GM12878 (cell line): ENCODE measurements at regions of chr4 and their contacts with region 1.

Region 1: DNA sequence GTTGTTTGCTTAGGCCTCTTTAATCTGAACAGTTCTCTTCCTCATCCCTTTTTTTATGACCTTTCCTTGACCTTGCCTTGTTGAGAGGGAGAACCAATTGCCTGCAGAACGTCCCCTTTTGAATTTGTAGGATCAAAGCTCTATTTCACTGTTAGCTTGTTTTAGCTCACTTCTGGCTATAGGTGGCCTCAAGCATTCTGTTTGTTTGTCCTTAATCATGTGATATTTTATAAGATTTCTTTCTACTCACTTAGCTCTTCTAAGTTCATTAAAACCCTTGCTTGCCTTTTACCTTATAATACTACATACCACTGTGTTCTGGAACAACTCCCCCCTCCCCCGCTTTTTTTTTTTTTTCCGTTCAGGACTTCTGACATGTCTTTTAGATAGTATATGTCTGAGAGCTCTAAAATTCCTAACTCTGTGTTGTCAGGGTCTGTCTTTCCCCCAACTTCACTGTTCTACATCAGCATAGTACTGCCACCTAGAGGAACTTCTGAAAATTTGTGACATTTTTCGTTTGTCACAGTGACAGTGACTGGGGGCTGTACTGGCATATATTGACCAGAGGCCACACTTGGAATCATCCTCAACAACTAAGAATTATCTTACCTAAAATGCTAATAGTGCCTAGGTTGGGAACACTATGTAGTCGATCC is 128.5 kb downstream of the LARP7 start:
- DNase-seq: peak; percentile 7
- ATAC-seq: peak; percentile 91
- H3K4me3 ChIP-seq: no peak overlapping the region
- H3K27ac ChIP-seq: no peak overlapping the region
- H3K4me1 ChIP-seq: no peaks in the 10 kb centered on the region; the same call in 1 of the 2 replicates
- H3K27me3 ChIP-seq: no peaks in the 10 kb centered on the region
- CTCF ChIP-seq: peak; percentile 49 to 58 (median 56); a peak in 5 of 6 replicates
- EP300 ChIP-seq: no peak
- POLR2A ChIP-seq: no peak
- RAD21 ChIP-seq: peak; percentile 67

Region 2: GRCh38 chr4:112099701-112100297 is 665.6 kb before region 1 on chr4:
- CTCF ChIA-PET with region 1: interaction called, 11 read pairs
- POLR2A ChIA-PET with region 1: no interaction called
- RAD21 ChIA-PET with region 1: interaction called, 5 read pairs
- SMC1A ChIA-PET with region 1: interaction called, 4 read pairs
- in situ Hi-C with region 1: no loop called
- intact Hi-C with region 1: no loop called
- DNase-seq: peak; percentile 27
- ATAC-seq: peak; percentile 93
- H3K4me3 ChIP-seq: no peak overlapping the region
- H3K27ac ChIP-seq: no peak overlapping the region
- H3K4me1 ChIP-seq: no peaks in the 10 kb centered on the region
- H3K27me3 ChIP-seq: no peaks in the 10 kb centered on the region
- CTCF ChIP-seq: peak; percentile 35 to 66 (median 50); a peak in 5 of 6 replicates
- EP300 ChIP-seq: no peak
- POLR2A ChIP-seq: no peak
- RAD21 ChIP-seq: peak; percentile 75

Region 3: GRCh38 chr4:112472318-112472717 is 293.1 kb before region 1 on chr4:
- CTCF ChIA-PET with region 1: no interaction called
- POLR2A ChIA-PET with region 1: no interaction called
- RAD21 ChIA-PET with region 1: no interaction called
- SMC1A ChIA-PET with region 1: no interaction called
- in situ Hi-C with region 1: no loop called
- intact Hi-C with region 1: no loop called
- DNase-seq: no peak
- ATAC-seq: no peak
- H3K4me3 ChIP-seq: no peak overlapping the region
- H3K27ac ChIP-seq: no peak overlapping the region
- H3K4me1 ChIP-seq: no peaks in the 10 kb centered on the region
- H3K27me3 ChIP-seq: no peaks in the 10 kb centered on the region
- CTCF ChIP-seq: no peak
- EP300 ChIP-seq: no peak
- POLR2A ChIP-seq: no peak
- RAD21 ChIP-seq: no peak

Region 4: GRCh38 chr4:112523764-112524505 is 241.5 kb before region 1 on chr4:
- CTCF ChIA-PET with region 1: interaction called, 6 read pairs
- POLR2A ChIA-PET with region 1: no interaction called
- RAD21 ChIA-PET with region 1: no interaction called
- SMC1A ChIA-PET with region 1: interaction called, 4 read pairs
- in situ Hi-C with region 1: no loop called
- intact Hi-C with region 1: loop called (anchors 5 kb)
- DNase-seq: no peak
- ATAC-seq: peak; percentile 96
- H3K4me3 ChIP-seq: peak overlapping the region; percentile 73; the same call in 1 of the 2 replicates
- H3K27ac ChIP-seq: no peak overlapping the region
- H3K4me1 ChIP-seq: peaks cover 3% of the 10 kb centered on the region
- H3K27me3 ChIP-seq: no peaks in the 10 kb centered on the region; a peak in 2 of 4 replicates
- CTCF ChIP-seq: peak; percentile 88 to 92 (median 90)
- EP300 ChIP-seq: no peak
- POLR2A ChIP-seq: no peak
- RAD21 ChIP-seq: peak; percentile 85

Region 5: DNA sequence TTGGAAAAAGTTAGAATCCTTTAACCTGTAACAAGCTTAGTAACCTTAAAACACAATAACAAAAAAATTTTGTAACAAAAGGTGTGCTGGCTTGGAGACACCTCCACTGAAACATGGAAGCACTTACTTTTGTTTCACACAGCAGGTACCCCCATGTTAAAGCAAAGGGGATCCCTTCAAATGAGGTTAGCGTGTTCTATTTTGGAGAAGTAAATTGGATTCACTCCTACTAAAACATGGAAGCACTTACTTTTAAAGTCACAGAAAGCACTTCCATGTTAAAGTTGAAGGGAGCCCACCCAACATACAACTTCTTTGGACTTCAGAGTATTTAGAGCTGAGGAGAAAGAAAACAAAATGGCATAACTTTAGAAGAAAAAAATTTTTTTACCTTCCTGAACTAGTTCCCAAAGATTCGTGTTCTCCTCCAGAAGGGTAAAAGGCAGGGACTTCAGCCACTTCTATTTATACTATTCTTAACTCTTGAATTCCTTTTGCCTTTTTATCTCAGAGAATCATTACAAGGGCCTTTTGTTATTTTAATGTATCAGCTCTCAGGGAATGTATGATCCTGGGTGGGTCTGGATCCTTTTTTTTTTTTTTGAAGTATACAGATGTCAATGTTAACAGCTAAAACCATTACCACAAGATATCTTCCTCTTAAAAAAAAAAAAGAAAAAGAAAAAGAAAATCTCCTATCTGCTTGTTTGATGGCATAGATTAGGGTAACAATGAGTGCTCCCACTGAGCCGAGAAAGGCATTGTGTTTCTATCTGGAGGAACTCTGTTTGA is 117.0 kb before region 1 on chr4:
- CTCF ChIA-PET with region 1: interaction called, 37 read pairs
- POLR2A ChIA-PET with region 1: no interaction called
- RAD21 ChIA-PET with region 1: interaction called, 7 read pairs
- SMC1A ChIA-PET with region 1: interaction called, 24 read pairs
- in situ Hi-C with region 1: no loop called
- intact Hi-C with region 1: no loop called
- DNase-seq: no peak
- ATAC-seq: no peak
- H3K4me3 ChIP-seq: no peak overlapping the region
- H3K27ac ChIP-seq: no peak overlapping the region
- H3K4me1 ChIP-seq: peaks cover 1% of the 10 kb centered on the region; the same call in 1 of the 2 replicates
- H3K27me3 ChIP-seq: no peaks in the 10 kb centered on the region
- CTCF ChIP-seq: no peak
- EP300 ChIP-seq: no peak
- POLR2A ChIP-seq: no peak
- RAD21 ChIP-seq: no peak

Region 6: GRCh38 chr4:112735474-112735951 is 29.9 kb before region 1 on chr4:
- CTCF ChIA-PET with region 1: interaction called, 12 read pairs
- POLR2A ChIA-PET with region 1: interaction called, 3 read pairs
- RAD21 ChIA-PET with region 1: interaction called, 4 read pairs
- SMC1A ChIA-PET with region 1: interaction called, 8 read pairs
- in situ Hi-C with region 1: no loop called
- intact Hi-C with region 1: loop called (anchors 2 kb)
- DNase-seq: peak; percentile 69
- ATAC-seq: peak; percentile 84
- H3K4me3 ChIP-seq: no peak overlapping the region
- H3K27ac ChIP-seq: peak overlapping the region; percentile 77; the same call in 1 of the 2 replicates
- H3K4me1 ChIP-seq: peaks cover 27% of the 10 kb centered on the region
- H3K27me3 ChIP-seq: no peaks in the 10 kb centered on the region
- CTCF ChIP-seq: no peak
- EP300 ChIP-seq: peak; percentile 82 to 92; a peak in 3 of 4 replicates
- POLR2A ChIP-seq: no peak
- RAD21 ChIP-seq: no peak

Region 7: DNA sequence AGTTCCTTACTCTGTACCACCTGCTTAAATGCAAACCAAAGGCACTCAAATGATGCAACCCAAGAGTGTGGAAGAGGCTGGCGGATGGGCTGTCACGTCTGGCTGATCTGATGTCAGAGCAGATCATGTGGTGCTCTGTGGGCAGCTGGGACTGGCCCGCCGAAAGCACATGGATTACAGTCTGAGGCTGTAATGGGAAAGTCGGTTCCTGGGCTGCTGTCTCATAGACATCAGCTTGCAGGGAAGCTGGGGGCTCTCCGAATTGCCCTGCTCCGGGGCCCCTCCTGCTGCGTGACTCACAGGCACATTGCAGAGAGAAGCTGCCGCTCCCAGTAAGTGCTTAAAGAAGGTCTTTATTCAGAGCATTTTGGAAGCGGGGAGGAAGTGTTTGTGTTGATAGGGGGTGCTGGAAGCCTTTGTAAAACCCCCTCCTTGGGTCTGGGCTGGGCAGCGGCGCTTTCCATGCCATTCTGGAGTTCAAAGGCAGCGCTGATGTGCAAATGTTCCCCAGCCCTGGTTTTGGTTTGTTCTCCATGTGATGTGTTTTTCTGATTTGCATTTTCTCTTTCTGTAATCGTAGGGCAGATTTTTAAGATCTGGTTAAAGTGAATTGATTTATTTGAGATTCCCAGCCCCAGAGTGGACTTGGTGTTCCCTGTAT is 52.6 kb after region 1 on chr4:
- CTCF ChIA-PET with region 1: interaction called, 14 read pairs
- POLR2A ChIA-PET with region 1: no interaction called
- RAD21 ChIA-PET with region 1: interaction called, 7 read pairs
- SMC1A ChIA-PET with region 1: interaction called, 5 read pairs
- in situ Hi-C with region 1: no loop called
- intact Hi-C with region 1: no loop called
- DNase-seq: peak; percentile 55
- ATAC-seq: peak; percentile 96
- H3K4me3 ChIP-seq: peak overlapping the region; percentile 80
- H3K27ac ChIP-seq: peak overlapping the region; percentile 54
- H3K4me1 ChIP-seq: no peaks in the 10 kb centered on the region
- H3K27me3 ChIP-seq: no peaks in the 10 kb centered on the region
- CTCF ChIP-seq: peak in 1 of 3 experiments; percentile 32; a peak in 1 of 6 replicates
- EP300 ChIP-seq: 0 out of 4 replicates have a peak, but pooled peaks of 1 of the 2 experiments have one; percentile 6
- POLR2A ChIP-seq: peak; percentile 89
- RAD21 ChIP-seq: no peak; the same call in 1 of the 2 replicates

Region 8: DNA sequence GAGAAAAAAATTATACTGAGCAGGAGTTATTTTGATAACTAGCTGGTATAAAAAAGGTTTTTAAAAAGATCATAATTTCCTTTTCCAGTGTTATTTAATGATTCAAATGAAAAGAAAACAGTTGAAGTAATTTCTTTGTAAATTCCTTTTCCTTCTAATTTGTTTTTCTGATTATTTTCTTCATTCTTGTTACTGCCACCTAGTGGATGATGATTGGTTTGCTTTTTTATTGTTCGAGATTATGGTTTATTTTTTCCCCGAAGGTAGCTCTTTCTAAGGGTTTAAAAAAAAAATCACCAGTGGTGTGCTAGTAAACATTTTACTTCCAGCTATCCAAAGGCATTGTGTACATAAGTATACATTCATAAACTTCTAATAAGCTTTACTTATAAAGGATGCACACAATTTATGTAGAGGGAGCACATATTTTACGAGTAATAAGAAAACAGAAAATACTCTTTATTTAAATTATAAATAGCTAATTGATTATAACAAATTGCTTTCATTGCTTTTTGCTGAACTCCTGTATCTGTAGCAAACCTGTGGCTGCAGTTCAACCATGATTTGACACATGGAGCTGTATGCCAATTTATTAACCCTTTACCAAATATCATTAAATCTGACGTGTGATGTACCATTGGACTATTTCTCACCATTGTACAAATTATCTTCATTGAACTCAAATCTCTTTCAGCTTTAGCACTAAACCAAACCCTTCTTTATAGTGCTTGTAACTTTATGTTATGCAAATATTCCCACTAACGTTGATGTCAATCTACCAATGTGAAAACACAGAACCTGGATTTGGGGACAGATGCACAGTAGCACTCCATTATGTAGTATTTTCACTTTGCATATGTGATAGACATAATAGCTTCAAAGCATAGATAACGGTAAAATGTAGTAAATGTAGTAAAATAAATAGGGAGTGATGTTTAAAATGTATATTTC is 186.2 kb after region 1 on chr4:
- CTCF ChIA-PET with region 1: interaction called, 320 read pairs
- POLR2A ChIA-PET with region 1: interaction called, 3 read pairs
- RAD21 ChIA-PET with region 1: interaction called, 4 read pairs
- SMC1A ChIA-PET with region 1: interaction called, 13 read pairs
- in situ Hi-C with region 1: no loop called
- intact Hi-C with region 1: no loop called
- DNase-seq: no peak
- ATAC-seq: no peak
- H3K4me3 ChIP-seq: no peak overlapping the region
- H3K27ac ChIP-seq: no peak overlapping the region
- H3K4me1 ChIP-seq: no peaks in the 10 kb centered on the region
- H3K27me3 ChIP-seq: no peaks in the 10 kb centered on the region
- CTCF ChIP-seq: peak; percentile 35 to 45 (median 39); a peak in 4 of 6 replicates
- EP300 ChIP-seq: no peak
- POLR2A ChIP-seq: no peak
- RAD21 ChIP-seq: no peak